IMR-90 (cell line): ENCODE measurements at regions of chr6 and their contacts with region 1.

Region 1: GRCh38 chr6:55117267-55117666 is 57.0 kb upstream of the HCRTR2 start:
- DNase-seq: no peak
- ATAC-seq: no peak
- H3K4me3 ChIP-seq: no peak overlapping the region
- H3K27ac ChIP-seq: no peak overlapping the region
- H3K4me1 ChIP-seq: no peaks in the 10 kb centered on the region
- H3K27me3 ChIP-seq: no peaks in the 10 kb centered on the region
- CTCF ChIP-seq: no peak
- POLR2A ChIP-seq: no peak
- RAD21 ChIP-seq: no peak

Region 2: GRCh38 chr6:54156650-54157250 is 960.5 kb before region 1 on chr6:
- CTCF ChIA-PET with region 1: no interaction called
- POLR2A ChIA-PET with region 1: interaction called, 14 read pairs
- dilution Hi-C with region 1: no loop called
- in situ Hi-C with region 1: no loop called
- intact Hi-C with region 1: no loop called
- DNase-seq: no peak
- ATAC-seq: no peak
- H3K4me3 ChIP-seq: no peak overlapping the region
- H3K27ac ChIP-seq: no peak overlapping the region
- H3K4me1 ChIP-seq: no peaks in the 10 kb centered on the region
- H3K27me3 ChIP-seq: no peaks in the 10 kb centered on the region
- CTCF ChIP-seq: no peak
- POLR2A ChIP-seq: no peak
- RAD21 ChIP-seq: no peak

Region 3: GRCh38 chr6:55058701-55059100 is 58.6 kb before region 1 on chr6:
- CTCF ChIA-PET with region 1: no interaction called
- POLR2A ChIA-PET with region 1: no interaction called
- dilution Hi-C with region 1: no loop called
- in situ Hi-C with region 1: no loop called
- intact Hi-C with region 1: no loop called
- DNase-seq: no peak
- ATAC-seq: no peak
- H3K4me3 ChIP-seq: no peak overlapping the region
- H3K27ac ChIP-seq: no peak overlapping the region
- H3K4me1 ChIP-seq: no peaks in the 10 kb centered on the region
- H3K27me3 ChIP-seq: no peaks in the 10 kb centered on the region
- CTCF ChIP-seq: no peak
- POLR2A ChIP-seq: no peak
- RAD21 ChIP-seq: no peak